Heart left ventricle (tissue), 16 donors: ENCODE measurements at regions of chr9 and their contacts with region 1.

Region 1: DNA sequence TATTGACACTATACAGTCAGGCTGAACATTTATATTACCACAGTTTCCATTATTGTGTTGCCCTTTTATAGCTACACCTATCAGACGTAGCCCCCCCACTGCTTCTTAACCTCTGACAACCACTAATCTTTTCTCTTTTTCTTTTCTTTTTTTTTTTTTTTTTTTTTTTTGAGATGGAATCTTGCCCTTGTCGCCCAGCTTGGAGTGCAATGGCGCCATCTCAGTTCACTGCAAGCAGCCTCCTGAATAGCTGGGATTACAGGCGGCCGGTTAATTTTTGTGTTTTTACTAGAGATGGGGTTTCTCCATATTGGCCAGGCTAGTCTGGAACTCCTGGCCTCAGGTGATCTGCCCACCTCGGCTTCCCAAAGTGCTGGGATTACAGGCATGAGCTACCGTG is 75.4 kb downstream of the UHRF2 start:
- DNase-seq: no peak
- ATAC-seq: no peak
- H3K4me3 ChIP-seq: no peak overlapping the region
- H3K27ac ChIP-seq: no peak overlapping the region
- H3K4me1 ChIP-seq: no peaks in the 10 kb centered on the region
- H3K27me3 ChIP-seq: no peaks in the 10 kb centered on the region
- CTCF ChIP-seq: no peak
- POLR2A ChIP-seq: no peak

Region 2: GRCh38 chr9:6428940-6429889 is 59.2 kb before region 1 on chr9:
- intact Hi-C with region 1: loop called in 2 of 10 experiments (anchors 10 kb)
- DNase-seq: no peak
- ATAC-seq: no peak
- H3K4me3 ChIP-seq: no peak overlapping the region
- H3K27ac ChIP-seq: peak overlapping the region in 1 of 12 donors; percentile 49
- H3K4me1 ChIP-seq: peaks cover 0 to 78% (median 11%) of the 10 kb centered on the region in 12 donors
- H3K27me3 ChIP-seq: no peaks in the 10 kb centered on the region
- CTCF ChIP-seq: no peak
- POLR2A ChIP-seq: no peak